ENCODE measurements at regions of chr17 and their contacts with region 1.

Region 1: GRCh38 chr17:76623271-76624146 is 20.0 kb downstream of the ST6GALNAC1 start:
- DNase-seq: peak; percentile 81
- H3K4me3 ChIP-seq: no peak overlapping the region
- H3K27ac ChIP-seq: no peak overlapping the region
- H3K4me1 ChIP-seq: peaks cover 0 to 3% (median 0%) of the 10 kb centered on the region in 4 donors
- H3K27me3 ChIP-seq: no peaks in the 10 kb centered on the region
- CTCF ChIP-seq: peak; percentile 88 to 97 (median 96)
- EP300 ChIP-seq: no peak
- POLR2A ChIP-seq: no peak

Region 2: DNA sequence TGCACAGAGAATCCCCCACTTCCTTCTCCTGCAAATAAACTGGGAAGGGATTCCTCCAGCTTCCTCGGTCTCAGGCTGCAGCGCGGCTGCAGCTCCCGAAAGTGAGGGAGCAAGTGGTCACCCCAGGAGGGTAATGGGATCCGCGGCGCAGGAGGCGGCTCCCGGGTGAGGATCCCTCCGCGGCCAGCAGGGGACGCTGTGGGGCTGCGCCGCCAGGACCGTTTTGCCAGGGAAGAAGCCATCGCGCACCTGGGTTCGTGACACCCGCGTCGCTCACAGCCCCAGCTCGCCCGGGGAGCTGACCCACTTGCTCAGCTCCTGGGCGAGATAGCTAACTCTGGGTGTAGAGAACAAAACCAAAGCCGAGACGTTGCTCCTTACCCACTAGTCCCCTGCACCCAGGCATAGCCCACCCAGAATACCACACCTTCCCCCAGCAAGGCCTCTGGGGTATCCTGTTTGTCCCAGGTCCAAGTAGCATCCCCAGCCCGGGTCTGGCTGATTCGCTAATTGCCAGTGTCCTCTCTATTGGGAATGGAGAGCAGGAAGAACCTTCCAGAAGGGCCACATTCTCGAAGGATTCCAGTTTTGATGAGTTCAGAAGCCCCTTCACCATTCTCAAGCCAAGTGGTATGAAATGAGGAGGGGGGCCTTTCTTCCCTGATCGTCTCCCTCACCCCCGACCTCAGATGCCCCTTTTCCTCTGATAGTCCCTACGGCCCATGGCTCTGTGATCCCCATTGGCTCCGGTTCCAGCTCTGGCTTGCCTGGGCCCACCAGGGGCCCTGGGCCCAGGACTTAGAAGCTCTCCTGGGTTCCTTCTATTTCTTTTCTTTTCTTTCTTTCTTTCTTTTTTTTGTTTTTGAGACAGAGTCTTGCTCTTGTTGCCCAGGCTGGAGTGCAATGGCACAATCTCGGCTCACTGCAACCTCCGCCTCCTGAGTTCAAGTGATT is 100.1 kb before region 1 on chr17:
- in situ Hi-C with region 1: loop called in 1 of 4 experiments (anchors 10 kb)
- intact Hi-C with region 1: loop called (anchors 2 kb)
- DNase-seq: peak; percentile 83
- H3K4me3 ChIP-seq: no peak overlapping the region
- H3K27ac ChIP-seq: no peak overlapping the region
- H3K4me1 ChIP-seq: peaks cover 7 to 36% (median 20%) of the 10 kb centered on the region in 4 donors
- H3K27me3 ChIP-seq: peaks cover 13% of the 10 kb centered on the region
- CTCF ChIP-seq: peak; percentile 98 to 100 (median 100)
- EP300 ChIP-seq: no peak
- POLR2A ChIP-seq: no peak

Measured in transverse colon (tissue), 4 donors.